Heart left ventricle (tissue), 16 donors: ENCODE measurements at regions of chr5 and their contacts with region 1.

Region 1: GRCh38 chr5:152900332-152900731 is 495.3 kb upstream of the NMUR2 start:
- DNase-seq: no peak
- ATAC-seq: no peak
- H3K4me3 ChIP-seq: no peak overlapping the region
- H3K27ac ChIP-seq: no peak overlapping the region
- H3K4me1 ChIP-seq: no peaks in the 10 kb centered on the region
- H3K27me3 ChIP-seq: no peaks in the 10 kb centered on the region
- CTCF ChIP-seq: no peak
- POLR2A ChIP-seq: no peak

Region 2: DNA sequence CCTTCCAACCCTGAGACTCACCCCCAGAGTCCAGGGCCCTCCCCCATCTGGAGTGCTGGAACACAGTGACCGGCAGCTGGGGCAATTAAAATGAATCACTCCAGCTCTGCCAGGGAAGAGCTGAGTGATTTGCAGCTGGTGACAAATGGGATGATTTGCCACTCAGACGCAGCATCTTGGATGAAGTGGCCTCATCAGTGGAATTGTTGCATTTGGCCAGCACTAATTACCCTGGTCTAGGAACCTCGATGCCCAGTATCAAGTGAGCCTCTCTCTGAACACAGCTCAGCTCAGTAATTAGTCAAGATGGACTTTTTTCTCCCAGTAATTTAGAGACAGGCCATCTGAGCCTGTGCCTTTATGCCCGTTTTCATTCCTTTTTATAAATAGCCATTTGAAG is 849.6 kb after region 1 on chr5:
- intact Hi-C with region 1: loop called in 1 of 10 experiments (anchors 10 kb)
- DNase-seq: no peak
- ATAC-seq: no peak
- H3K4me3 ChIP-seq: no peak overlapping the region
- H3K27ac ChIP-seq: no peak overlapping the region
- H3K4me1 ChIP-seq: peaks cover 0 to 8% (median 0%) of the 10 kb centered on the region in 12 donors
- H3K27me3 ChIP-seq: no peaks in the 10 kb centered on the region
- CTCF ChIP-seq: no peak
- POLR2A ChIP-seq: no peak